Right ventricle myocardium inferior (tissue), 1 donor: ENCODE measurements at regions of chr20 and their contacts with region 1.

Region 1: GRCh38 chr20:10553326-10553984 is 118.3 kb downstream of the SLX4IP start:
- DNase-seq: no peak
- ATAC-seq: peak; percentile 70

Region 2: DNA sequence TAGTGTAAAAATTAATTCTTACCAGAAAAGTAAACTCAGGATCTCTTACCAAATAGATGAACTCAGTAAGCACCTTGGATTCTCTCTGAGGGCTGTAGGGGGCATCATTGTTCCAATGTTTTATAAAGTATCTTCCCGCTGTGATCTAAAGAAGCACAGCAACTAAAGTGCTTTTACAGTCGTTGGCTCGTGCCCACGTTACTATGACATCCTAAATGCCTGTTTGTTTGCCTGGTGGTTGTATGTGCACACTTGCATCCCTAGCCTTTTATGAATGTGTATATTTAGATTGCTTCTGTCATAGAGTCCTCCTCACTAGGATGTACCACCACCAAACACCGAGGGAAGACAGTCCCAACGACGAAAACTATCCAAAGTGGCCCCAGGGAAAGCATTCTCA is 83.9 kb before region 1 on chr20:
- intact Hi-C with region 1: loop called (anchors 5 kb)
- DNase-seq: no peak
- ATAC-seq: peak; percentile 74

Region 3: GRCh38 chr20:10603971-10604864 is 50.8 kb after region 1 on chr20:
- intact Hi-C with region 1: no loop called
- DNase-seq: no peak
- ATAC-seq: peak; percentile 92

Region 4: GRCh38 chr20:10893331-10893730 is 339.9 kb after region 1 on chr20:
- intact Hi-C with region 1: no loop called
- DNase-seq: no peak
- ATAC-seq: no peak

Region 5: DNA sequence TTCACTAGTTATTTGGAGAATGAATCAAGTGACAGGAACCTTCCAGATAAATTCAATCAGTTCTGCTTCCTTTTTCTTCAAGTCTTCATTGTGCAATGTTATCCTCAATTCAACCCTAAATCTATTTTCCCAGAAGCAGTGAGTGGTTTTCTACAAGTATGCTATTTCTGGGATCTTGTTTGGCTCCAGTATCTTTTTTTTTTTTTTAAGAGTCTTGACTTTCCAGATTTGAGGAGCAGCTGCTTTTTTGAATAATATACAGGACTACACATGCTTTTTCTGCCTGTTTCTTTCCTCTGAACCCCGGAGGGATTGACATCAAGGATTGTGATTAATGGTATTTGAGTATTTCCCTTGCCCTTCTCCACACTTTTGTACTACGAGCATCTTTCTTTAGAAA is 459.5 kb after region 1 on chr20:
- intact Hi-C with region 1: loop called (anchors 10 kb)
- DNase-seq: no peak
- ATAC-seq: peak; percentile 86

Region 6: GRCh38 chr20:11204926-11205768 is 651.7 kb after region 1 on chr20:
- intact Hi-C with region 1: loop called (anchors 2 kb)
- DNase-seq: no peak
- ATAC-seq: peak; percentile 89

Region 7: DNA sequence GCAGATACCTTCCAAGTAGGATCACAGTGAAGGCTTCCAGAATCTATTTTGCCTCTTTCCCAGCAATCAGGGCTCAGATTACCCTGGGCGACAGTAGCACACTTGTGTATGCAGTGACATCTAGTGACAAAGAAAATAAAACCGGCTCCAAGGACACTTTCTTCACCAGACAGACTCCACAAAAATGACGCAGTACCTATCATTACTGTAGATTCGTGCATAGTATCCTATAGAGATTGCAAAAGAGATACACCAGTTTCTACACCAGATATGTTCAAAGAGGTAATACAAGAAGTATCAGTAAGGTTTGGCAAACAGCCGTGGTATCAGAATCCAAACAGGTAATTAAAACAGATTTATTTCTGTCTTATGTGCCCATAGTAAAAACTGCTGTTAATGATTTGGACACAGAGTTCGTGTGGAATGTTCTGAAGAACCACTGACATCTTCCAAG is 720.7 kb after region 1 on chr20:
- intact Hi-C with region 1: loop called (anchors 1 kb)
- DNase-seq: no peak
- ATAC-seq: peak; percentile 78

Region 8: DNA sequence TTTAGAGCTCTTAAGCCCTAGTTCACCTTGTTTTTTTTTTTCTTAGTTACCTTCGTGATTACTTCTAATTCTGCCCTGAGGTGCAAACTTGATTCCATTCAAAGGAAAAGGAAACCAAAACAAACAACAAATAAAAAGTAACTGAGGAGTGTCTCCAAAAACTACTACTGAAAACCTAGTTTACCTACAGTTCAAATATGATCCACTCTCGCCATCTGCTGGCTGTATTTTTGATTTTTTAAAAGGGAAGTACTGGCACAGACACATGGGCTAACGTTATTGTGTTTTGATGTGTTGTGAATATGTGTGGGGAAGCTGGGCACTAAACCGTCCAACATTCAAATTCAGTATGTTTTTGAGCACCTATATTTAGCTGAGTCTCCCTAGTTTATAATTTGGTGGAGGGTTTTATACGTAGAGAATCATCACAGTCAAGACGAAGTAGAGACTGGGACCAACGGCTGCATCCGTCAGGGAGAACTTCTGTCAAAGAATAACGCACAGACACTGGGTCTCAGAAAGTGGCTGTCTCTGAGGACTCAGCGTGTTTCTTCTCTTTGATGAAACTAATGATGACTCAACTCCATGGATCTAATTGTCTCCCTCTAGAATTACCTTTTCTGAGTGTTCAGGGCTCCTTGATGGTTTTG is 990.7 kb after region 1 on chr20:
- intact Hi-C with region 1: loop called (anchors 5 kb)
- DNase-seq: no peak
- ATAC-seq: no peak